ENCODE measurements at regions of chr11 and their contacts with region 1.

Region 1: DNA sequence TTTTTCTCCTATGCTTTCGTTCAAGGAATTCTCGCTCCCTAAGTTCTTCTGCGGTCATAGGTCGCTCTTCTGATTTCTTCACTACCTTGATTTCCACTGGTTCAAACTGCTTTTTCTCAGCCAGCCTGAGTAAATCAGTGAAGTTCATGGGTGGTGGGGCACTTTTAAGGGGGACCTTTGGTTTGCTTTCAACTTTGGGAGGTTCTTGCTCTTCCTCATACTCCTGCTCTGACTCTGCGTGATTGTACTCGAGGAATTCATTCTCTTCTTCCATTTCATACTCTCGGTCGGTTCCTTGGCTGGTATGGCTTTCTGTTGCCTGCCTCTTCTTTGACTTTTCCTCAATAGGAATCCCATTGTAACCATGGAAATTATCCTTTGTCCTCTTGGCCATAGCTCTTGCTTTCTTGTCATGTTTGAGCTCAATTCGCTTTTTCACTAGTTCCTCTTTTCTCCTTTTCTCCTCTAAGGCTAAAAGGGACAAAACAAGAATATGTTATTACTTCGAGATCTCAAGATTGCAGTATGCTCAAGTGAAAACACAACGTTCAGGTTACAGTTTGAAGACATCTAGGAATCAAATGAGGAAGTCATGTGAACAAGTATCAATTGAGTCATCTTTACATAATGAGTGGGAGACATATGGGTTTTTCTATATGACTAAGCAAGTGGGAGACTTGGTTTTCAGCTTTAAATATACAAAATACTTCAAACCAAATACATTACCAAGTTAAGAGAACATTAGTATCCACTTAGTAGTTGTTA is 16.2 kb downstream of the MISFA start:
- DNase-seq: no peak
- H3K4me3 ChIP-seq: no peak overlapping the region
- H3K27ac ChIP-seq: no peak overlapping the region
- H3K4me1 ChIP-seq: no peaks in the 10 kb centered on the region
- H3K27me3 ChIP-seq: no peaks in the 10 kb centered on the region
- CTCF ChIP-seq: no peak

Region 2: GRCh38 chr11:18540207-18541009 is 75.4 kb before region 1 on chr11:
- CTCF ChIA-PET with region 1: no interaction called
- POLR2A ChIA-PET with region 1: no interaction called
- intact Hi-C with region 1: no loop called
- DNase-seq: peak in 1 of 2 experiments; percentile 51
- H3K4me3 ChIP-seq: no peak overlapping the region
- H3K27ac ChIP-seq: no peak overlapping the region
- H3K4me1 ChIP-seq: no peaks in the 10 kb centered on the region
- H3K27me3 ChIP-seq: no peaks in the 10 kb centered on the region
- CTCF ChIP-seq: peak; percentile 78

Region 3: DNA sequence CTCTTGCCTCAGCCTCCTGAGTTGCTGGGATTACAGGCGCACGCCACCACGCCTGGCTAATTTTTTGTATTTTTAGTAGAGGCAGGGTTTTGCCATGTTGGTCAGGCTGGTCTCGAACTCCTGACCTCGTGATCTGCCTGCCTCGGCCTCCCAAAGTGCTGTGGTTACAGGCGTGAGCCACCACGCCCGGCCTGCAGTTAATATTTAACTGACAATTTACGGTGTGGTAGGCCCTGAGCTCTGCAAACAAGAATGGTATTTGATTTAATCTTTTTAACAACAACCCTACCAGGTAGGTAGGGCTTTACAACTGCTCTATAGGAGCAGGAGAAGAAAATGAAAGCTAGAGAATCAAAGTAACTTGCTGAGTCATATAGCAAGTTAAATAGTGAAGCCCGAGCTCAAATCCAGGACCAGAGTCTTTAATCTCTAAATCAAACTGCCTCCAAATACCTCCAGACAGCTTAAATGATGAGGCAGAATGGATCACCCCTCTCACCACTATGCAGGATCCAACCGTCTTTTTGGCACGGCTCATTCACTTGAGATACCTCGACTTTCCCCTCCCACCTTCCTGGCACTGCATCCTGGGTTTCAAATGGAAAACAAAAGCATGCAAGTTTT is 36.7 kb before region 1 on chr11:
- CTCF ChIA-PET with region 1: no interaction called
- POLR2A ChIA-PET with region 1: interaction called, 13 read pairs
- intact Hi-C with region 1: no loop called
- DNase-seq: peak in 1 of 2 experiments; percentile 31
- H3K4me3 ChIP-seq: no peak overlapping the region
- H3K27ac ChIP-seq: peak overlapping the region; percentile 29
- H3K4me1 ChIP-seq: no peaks in the 10 kb centered on the region
- H3K27me3 ChIP-seq: no peaks in the 10 kb centered on the region
- CTCF ChIP-seq: no peak